Stomach (tissue), 19 donors: ENCODE measurements at regions of chr2 and their contacts with region 1.

Region 1: DNA sequence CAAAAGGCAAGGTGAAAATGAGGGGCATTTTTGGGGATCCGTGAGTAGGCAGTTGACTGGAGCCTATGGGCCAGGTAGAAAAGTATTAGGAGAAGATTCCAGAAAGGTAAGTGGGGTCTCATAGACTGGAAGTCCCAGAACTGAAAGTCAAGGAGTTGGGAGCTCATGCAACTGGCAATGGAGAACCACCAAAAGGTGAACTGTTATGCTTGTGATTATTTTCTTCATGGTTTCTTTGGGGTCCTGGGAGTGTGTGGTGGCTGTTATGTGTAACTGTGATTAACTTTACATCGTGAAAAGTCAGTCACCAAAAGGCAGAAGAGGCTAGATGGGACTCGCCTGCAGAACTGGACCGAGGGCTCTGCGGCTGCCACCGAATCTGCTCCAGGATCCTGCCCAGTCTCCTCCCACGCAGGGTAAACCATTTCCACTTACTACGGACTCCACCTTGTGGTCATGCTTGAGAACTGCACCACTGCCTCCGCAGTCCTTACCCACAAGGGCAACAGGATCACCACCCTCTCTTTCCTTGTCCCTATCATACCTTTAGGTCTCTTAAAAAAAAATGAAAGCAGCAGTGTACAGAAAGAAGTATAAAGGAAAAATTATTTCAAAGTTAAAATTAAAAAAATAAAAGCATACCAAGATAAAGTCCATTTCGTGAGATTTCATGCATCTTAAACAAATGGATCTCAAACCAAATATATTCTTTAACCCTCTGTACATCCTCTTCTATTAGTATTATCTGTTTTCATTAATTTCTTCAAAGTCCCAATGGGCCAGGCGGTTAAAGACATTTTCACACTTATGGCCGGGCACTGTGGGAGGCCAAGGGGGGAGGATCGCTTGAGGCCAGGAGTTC is 15.6 kb upstream of the CEP68 start:
- DNase-seq: peak; percentile 89 to 93
- H3K4me3 ChIP-seq: no peak overlapping the region
- H3K27ac ChIP-seq: no peak overlapping the region
- H3K4me1 ChIP-seq: peaks cover 0 to 8% (median 2%) of the 10 kb centered on the region in 4 donors
- H3K27me3 ChIP-seq: no peaks in the 10 kb centered on the region
- CTCF ChIP-seq: peak in 6 of 7 experiments; percentile 77 to 100 (median 96)
- EP300 ChIP-seq: no peak
- POLR2A ChIP-seq: no peak

Region 2: DNA sequence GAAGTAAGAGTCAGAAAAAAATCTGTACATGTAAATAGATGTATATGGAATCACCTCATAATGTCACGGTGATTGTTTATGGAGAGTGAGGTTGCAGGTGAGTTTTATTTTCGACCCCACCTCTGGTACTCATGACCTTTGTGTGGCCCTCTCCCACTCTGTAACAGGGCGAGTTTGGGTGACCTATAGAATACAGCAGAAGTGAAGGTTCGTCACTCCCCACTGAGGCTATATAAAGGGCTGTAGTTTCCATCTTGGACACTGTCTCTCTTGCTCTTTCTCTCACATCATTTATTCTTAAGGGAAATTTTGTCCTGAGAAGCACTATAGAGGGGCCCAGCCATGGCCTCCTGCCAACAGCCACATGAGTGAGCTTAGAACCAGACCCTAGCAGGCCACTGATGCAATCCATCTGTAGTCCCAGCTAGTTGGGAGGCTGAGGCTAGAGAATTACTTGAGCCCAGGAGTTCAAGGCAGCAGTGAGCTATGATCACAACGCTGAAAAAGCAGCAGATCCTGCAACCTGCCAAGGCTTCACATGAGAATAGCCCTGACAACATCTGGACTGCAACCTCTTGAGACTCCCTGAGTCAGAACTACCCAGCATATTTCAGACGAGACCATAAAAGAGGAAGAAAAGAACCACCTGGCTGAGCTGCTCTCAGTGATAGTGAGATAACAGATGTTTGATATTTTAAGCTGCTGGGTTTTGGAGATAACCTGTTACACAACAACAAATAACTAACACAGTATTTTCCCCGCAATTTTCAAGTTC is 125.7 kb before region 1 on chr2:
- intact Hi-C with region 1: loop called (anchors 5 kb)
- DNase-seq: no peak
- H3K4me3 ChIP-seq: no peak overlapping the region
- H3K27ac ChIP-seq: no peak overlapping the region
- H3K4me1 ChIP-seq: peaks cover 0 to 11% (median 7%) of the 10 kb centered on the region in 4 donors
- H3K27me3 ChIP-seq: no peaks in the 10 kb centered on the region
- CTCF ChIP-seq: no peak
- EP300 ChIP-seq: no peak
- POLR2A ChIP-seq: no peak

Region 3: DNA sequence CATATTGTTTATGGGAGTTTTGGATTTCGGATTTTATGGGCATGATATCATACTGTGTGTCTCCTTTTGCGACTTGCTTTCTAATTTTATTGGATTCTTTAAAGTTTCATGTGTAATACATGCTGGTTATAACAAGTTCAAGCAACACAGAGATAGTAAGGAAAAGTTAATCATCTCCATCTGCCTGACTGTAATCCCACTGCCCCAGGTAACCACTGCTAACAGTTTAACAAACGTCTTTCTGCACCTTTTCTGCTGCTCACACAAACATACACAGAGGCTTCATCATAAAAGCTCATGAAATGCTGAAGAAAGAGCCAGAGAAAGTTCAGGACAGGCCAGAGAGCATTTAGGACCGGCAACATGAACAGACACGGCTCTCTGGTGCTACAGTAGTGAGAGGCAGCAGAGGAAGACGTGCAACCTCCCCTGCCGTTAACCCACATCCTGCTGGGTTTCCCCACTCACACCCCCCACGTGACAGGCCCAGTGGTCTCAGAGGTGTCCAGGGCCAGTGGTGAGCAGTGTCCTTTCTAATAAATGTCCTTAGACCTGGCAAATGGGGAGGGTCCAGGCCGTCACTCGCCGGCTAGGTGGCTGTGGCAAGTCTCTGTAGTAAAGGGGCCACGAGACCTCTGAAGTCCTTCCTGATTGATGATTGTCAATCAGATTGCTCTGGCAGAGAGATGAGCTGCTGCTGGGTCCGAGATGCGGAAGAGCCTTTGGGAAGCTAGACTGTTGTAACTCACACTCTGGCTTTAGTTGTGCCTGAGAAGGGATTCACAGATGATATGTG is 94.5 kb before region 1 on chr2:
- intact Hi-C with region 1: no loop called
- DNase-seq: peak; percentile 38 to 53
- H3K4me3 ChIP-seq: no peak overlapping the region
- H3K27ac ChIP-seq: peak overlapping the region in 3 of 5 donors; percentile 15 to 30 (median 20)
- H3K4me1 ChIP-seq: peaks cover 0 to 37% (median 11%) of the 10 kb centered on the region in 4 donors
- H3K27me3 ChIP-seq: no peaks in the 10 kb centered on the region
- CTCF ChIP-seq: no peak
- EP300 ChIP-seq: no peak
- POLR2A ChIP-seq: no peak